ENCODE measurements at regions of chr7 and their contacts with region 1.

Region 1: GRCh38 chr7:12257582-12257981 is 46.5 kb downstream of the TMEM106B start:
- DNase-seq: peak in 8 of 9 donors; percentile 31 to 80 (median 72)
- ATAC-seq: peak; percentile 97
- H3K4me3 ChIP-seq: peak overlapping the region; percentile 26
- H3K4me3 Mint-ChIP-seq: no peak overlapping the region
- H3K27ac ChIP-seq: peak overlapping the region; percentile 28
- H3K27ac Mint-ChIP-seq: no peak overlapping the region
- H3K4me1 ChIP-seq: peaks cover 23% of the 10 kb centered on the region in 2 donors
- H3K4me1 Mint-ChIP-seq: peaks cover 0 to 12% (median 9%) of the 10 kb centered on the region in 7 donors
- H3K27me3 ChIP-seq: no peaks in the 10 kb centered on the region
- H3K27me3 Mint-ChIP-seq: peaks cover 0 to 3% (median 0%) of the 10 kb centered on the region in 5 donors

Region 2: GRCh38 chr7:11193888-11194287 is 1063.7 kb before region 1 on chr7:
- CTCF ChIA-PET with region 1: no interaction called
- POLR2A ChIA-PET with region 1: no interaction called
- intact Hi-C with region 1: no loop called
- DNase-seq: no peak
- ATAC-seq: no peak
- H3K4me3 ChIP-seq: no peak overlapping the region
- H3K4me3 Mint-ChIP-seq: peak overlapping the region in 1 of 10 donors; percentile 71
- H3K27ac ChIP-seq: no peak overlapping the region
- H3K27ac Mint-ChIP-seq: peak overlapping the region in 1 of 9 donors; percentile 5
- H3K4me1 ChIP-seq: no peaks in the 10 kb centered on the region
- H3K4me1 Mint-ChIP-seq: peaks cover 0 to 11% (median 0%) of the 10 kb centered on the region in 7 donors
- H3K27me3 ChIP-seq: no peaks in the 10 kb centered on the region
- H3K27me3 Mint-ChIP-seq: peaks cover 0 to 15% (median 5%) of the 10 kb centered on the region in 5 donors

Region 3: GRCh38 chr7:12174931-12175330 is 82.7 kb before region 1 on chr7:
- CTCF ChIA-PET with region 1: no interaction called
- POLR2A ChIA-PET with region 1: no interaction called
- intact Hi-C with region 1: loop called in 1 of 2 experiments (anchors 5 kb)
- DNase-seq: no peak
- ATAC-seq: no peak
- H3K4me3 ChIP-seq: no peak overlapping the region
- H3K4me3 Mint-ChIP-seq: no peak overlapping the region
- H3K27ac ChIP-seq: no peak overlapping the region
- H3K27ac Mint-ChIP-seq: no peak overlapping the region
- H3K4me1 ChIP-seq: peaks cover 11 to 12% of the 10 kb centered on the region in 2 donors
- H3K4me1 Mint-ChIP-seq: peaks cover under 1 to 25% (median 19%) of the 10 kb centered on the region in 7 donors
- H3K27me3 ChIP-seq: no peaks in the 10 kb centered on the region
- H3K27me3 Mint-ChIP-seq: peaks cover 0 to 31% (median 0%) of the 10 kb centered on the region in 5 donors

Region 4: GRCh38 chr7:12222889-12223579 is 34.5 kb before region 1 on chr7:
- CTCF ChIA-PET with region 1: no interaction called
- POLR2A ChIA-PET with region 1: interaction called, 3 read pairs
- intact Hi-C with region 1: loop called (anchors 1 kb)
- DNase-seq: peak in 7 of 9 donors; percentile 41 to 72 (median 61)
- ATAC-seq: peak; percentile 87
- H3K4me3 ChIP-seq: no peak overlapping the region
- H3K4me3 Mint-ChIP-seq: peak overlapping the region; percentile 51 to 79 (median 66)
- H3K27ac ChIP-seq: peak overlapping the region; percentile 29
- H3K27ac Mint-ChIP-seq: peak overlapping the region; percentile 64 to 87 (median 84)
- H3K4me1 ChIP-seq: peaks cover 18 to 31% of the 10 kb centered on the region in 2 donors
- H3K4me1 Mint-ChIP-seq: peaks cover 30 to 88% (median 78%) of the 10 kb centered on the region in 7 donors
- H3K27me3 ChIP-seq: no peaks in the 10 kb centered on the region
- H3K27me3 Mint-ChIP-seq: no peaks in the 10 kb centered on the region

Region 5: GRCh38 chr7:12244129-12244528 is 13.5 kb before region 1 on chr7:
- CTCF ChIA-PET with region 1: interaction called, 3 read pairs
- POLR2A ChIA-PET with region 1: no interaction called
- intact Hi-C with region 1: loop called in 1 of 2 experiments (anchors 2 kb)
- DNase-seq: no peak
- ATAC-seq: no peak
- H3K4me3 ChIP-seq: no peak overlapping the region
- H3K4me3 Mint-ChIP-seq: no peak overlapping the region
- H3K27ac ChIP-seq: no peak overlapping the region
- H3K27ac Mint-ChIP-seq: no peak overlapping the region
- H3K4me1 ChIP-seq: no peaks in the 10 kb centered on the region
- H3K4me1 Mint-ChIP-seq: peaks cover 8 to 18% (median 15%) of the 10 kb centered on the region in 7 donors
- H3K27me3 ChIP-seq: no peaks in the 10 kb centered on the region
- H3K27me3 Mint-ChIP-seq: peaks cover 0 to 3% (median 0%) of the 10 kb centered on the region in 5 donors

Region 6: DNA sequence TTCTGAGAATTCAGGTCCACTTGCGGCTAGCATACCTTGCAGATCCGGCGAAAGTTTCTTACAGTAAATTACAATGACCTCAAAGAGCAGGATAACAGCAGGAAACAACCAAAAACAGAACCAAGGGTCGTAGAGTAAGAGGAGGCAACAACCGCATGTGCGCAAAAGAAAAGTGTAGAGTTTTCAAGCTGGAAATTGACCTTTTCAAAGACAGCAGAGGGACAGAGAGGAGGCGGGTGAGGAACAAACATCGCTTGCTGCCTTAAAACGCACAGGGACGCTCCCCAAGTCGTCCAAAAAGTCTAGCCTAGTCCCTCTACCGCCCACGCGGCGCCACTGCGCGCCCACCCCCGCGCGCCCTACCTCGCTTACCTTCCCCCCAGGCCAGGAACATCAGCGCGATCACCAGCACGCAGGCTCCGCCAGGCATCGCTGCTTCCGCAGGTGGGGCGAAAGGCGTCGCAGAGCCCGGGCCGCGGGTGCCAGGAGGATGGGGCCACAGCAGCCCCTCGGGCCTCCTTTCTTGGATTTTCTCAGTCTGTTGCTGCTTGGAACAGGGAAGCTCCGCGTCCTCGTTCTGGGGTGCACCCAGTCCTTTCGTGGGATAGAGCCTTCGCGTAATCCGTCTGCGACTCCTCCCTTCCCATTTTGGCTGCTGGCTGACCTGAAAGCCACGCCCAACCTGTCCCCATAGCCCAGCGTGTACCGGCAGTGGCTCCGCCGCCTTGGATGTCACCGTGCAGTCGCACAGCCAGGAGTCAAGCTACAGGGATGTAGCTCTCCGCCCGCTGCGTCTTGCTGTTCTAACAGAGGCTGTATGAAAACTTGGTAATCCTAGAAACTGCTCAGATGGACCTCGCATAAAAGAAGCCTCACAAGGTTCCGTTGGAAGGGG is 146.0 kb after region 1 on chr7 and contains the start of gene VWDE:
- CTCF ChIA-PET with region 1: no interaction called
- POLR2A ChIA-PET with region 1: no interaction called
- intact Hi-C with region 1: loop called in 1 of 2 experiments (anchors 5 kb)
- DNase-seq: peak; percentile 3 to 74 (median 29)
- ATAC-seq: peak; percentile 89
- H3K4me3 ChIP-seq: peak within 1 kb of the TSS; percentile 62
- H3K4me3 Mint-ChIP-seq: peak within 1 kb of the TSS; percentile 80 to 96 (median 88)
- H3K27ac ChIP-seq: peak within 1 kb of the TSS; percentile 38
- H3K27ac Mint-ChIP-seq: peak within 1 kb of the TSS in 6 of 9 donors; percentile 14 to 89 (median 82)
- H3K4me1 ChIP-seq: no peaks in the 10 kb centered on the region
- H3K4me1 Mint-ChIP-seq: peaks cover 11 to 20% (median 16%) of the 10 kb centered on the region in 7 donors
- H3K27me3 ChIP-seq: no peaks in the 10 kb centered on the region
- H3K27me3 Mint-ChIP-seq: peaks cover 14 to 44% (median 25%) of the 10 kb centered on the region in 5 donors
- total RNA-seq, gene VWDE: 1.3 to 4.9 (median 3.9) TPM